Activated T-helper 2 cell treated with anti-CD3 and anti-CD28 coated beads, Interferon-gamma antibody, Interleukin-2, Interleukin-4, amounts not matched to agents 10 μg/mL and 5 μg/mL and 100 μg/mL, durations not matched to agents 14 hours and 24 hours and 36 hours (primary cell): ENCODE measurements at regions of chr3 and their contacts with region 1.

Region 1: GRCh38 chr3:194333212-194333980 is 17.7 kb downstream of the CPN2 start:
- DNase-seq: peak; percentile 83
- H3K4me3 Mint-ChIP-seq: peak overlapping the region; percentile 70
- H3K27ac Mint-ChIP-seq: no peak overlapping the region
- H3K4me1 Mint-ChIP-seq: peaks cover 8% of the 10 kb centered on the region
- H3K27me3 Mint-ChIP-seq: peaks cover 28% of the 10 kb centered on the region

Region 2: DNA sequence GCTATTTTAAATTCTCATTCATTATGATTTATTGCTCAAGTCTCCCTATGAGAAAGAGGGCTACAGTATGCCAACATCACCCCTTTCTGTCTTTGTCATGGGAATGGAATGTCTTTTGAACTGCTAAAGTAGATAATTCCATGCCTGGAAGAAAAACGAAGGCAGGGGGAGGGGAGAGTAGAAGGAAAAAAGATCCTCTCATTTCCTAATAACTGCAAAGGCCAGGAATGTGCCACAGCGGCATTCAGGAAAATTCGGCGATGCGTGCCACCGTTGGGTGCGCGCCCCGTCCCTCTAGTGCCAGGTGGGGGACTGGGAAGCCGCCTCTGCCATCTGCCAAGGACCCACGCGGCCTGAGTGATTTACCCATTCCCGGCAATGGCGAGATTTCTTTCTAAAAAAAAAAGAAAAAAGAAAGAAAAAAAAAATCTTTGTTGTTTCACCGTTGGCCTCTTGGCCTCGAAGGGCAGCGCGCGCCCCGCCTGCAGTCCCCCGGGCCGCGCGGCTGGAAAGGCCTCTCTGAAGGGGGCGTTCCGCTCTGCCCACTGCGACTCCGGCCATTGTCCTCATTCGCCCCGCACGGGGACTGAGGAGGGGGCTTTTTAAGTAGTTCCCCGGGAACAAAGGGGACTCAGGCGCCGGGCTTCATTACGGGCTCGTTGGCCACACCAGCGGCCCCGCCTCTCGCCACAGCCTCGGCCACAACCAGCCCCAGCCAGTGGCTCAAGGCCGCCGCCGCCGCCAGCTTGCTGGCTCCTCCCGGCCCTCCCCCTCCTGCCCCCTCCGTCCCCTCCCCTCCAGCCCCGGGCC is 36.7 kb before region 1 on chr3:
- intact Hi-C with region 1: no loop called
- DNase-seq: no peak
- H3K4me3 Mint-ChIP-seq: no peak overlapping the region
- H3K27ac Mint-ChIP-seq: no peak overlapping the region
- H3K4me1 Mint-ChIP-seq: peaks cover 23% of the 10 kb centered on the region
- H3K27me3 Mint-ChIP-seq: peaks cover 22% of the 10 kb centered on the region

Region 3: GRCh38 chr3:194404365-194405140 is 71.2 kb after region 1 on chr3:
- intact Hi-C with region 1: loop called (anchors 1 kb)
- DNase-seq: no peak
- H3K4me3 Mint-ChIP-seq: no peak overlapping the region
- H3K27ac Mint-ChIP-seq: no peak overlapping the region
- H3K4me1 Mint-ChIP-seq: peaks cover 12% of the 10 kb centered on the region
- H3K27me3 Mint-ChIP-seq: no peaks in the 10 kb centered on the region

Region 4: DNA sequence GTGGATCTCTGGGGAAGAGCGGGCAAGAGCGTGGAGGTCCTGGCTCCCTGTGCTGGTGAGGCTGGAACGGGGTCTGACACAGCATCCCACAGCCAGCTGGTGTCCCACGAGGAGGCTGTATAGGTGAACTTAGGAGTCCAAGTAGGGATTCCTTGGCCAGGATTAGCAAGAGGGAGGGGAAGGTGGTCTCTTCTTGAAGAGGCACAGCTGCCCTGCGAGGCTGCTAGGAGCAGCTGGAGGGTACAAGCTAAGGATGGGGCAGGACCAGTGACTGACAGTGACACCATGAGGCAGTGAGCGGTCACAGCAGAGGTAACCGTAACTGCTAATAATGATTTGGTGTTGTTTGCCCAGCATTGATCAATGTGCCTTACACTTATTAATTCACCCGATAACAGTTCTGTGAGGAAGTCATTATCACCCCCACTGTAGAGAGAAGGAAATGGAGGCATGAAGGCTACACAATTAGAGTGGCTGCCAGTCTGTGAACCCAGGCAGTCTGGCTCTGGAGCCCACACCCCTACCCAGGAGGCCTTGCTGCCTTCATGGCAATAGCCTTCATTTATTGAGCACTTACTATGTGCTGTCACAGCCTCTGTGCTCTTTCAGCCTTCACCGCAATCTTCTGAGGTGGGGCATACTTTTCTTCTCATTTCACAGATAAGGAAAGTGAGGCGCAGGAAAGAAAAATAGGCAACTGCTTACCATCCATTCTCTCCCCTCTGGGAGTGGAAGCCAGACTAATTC is 240.5 kb after region 1 on chr3:
- intact Hi-C with region 1: loop called (anchors 5 kb)
- DNase-seq: no peak
- H3K4me3 Mint-ChIP-seq: no peak overlapping the region
- H3K27ac Mint-ChIP-seq: no peak overlapping the region
- H3K4me1 Mint-ChIP-seq: peaks cover 27% of the 10 kb centered on the region
- H3K27me3 Mint-ChIP-seq: peaks cover 26% of the 10 kb centered on the region

Region 5: DNA sequence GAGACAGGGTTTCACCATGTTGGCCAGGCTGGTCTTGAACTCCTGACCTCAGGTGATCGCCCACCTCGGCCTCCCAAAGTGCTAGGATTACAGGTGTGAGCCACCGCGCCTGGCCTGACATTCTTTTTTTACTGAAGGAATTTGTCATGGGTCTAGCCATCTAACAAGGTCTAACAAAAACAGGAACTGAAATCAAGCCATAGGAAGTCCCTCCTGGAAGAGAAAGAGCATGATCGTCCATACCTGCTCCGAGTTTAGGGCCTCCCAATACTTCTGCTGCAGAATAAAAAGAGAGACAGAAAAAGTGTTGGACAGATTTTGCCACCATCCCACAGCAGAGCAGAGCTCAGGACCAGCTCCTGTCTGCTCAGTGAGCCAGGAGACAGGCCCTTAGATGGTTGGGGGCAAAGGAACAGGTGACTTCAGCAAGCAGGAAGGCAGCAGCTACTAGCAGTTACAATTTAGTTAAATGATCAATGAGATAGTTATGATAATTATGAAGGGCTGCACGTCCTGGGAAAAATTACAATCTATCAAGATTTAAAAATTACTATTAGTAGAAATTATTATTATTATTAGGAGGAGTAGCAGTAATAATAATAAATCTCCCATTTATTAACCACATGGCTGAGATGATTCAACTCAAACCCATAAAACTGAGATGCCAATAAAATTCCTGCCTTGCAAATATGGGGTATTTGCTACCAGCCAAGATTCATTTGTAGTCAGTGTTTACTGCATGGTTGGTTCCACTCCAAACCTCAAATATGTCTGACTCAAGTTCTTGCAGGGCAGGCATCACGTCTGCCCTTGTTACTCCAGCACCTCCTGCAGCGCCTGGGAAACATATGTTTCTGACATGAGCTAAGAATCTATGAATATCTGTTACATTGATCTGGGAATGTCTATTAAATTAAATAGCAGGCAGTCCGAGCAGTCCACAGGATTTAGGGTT is 259.7 kb after region 1 on chr3:
- intact Hi-C with region 1: loop called (anchors 2 kb)
- DNase-seq: no peak
- H3K4me3 Mint-ChIP-seq: no peak overlapping the region
- H3K27ac Mint-ChIP-seq: no peak overlapping the region
- H3K4me1 Mint-ChIP-seq: peaks cover 5% of the 10 kb centered on the region
- H3K27me3 Mint-ChIP-seq: no peaks in the 10 kb centered on the region